ENCODE measurements at regions of chr15 and their contacts with region 1.

Region 1: GRCh38 chr15:66472176-66472999 is 25.2 kb downstream of the SNAPC5 start:
- DNase-seq: no peak
- H3K4me3 ChIP-seq: no peak overlapping the region
- H3K27ac ChIP-seq: peak overlapping the region; percentile 61
- H3K27me3 ChIP-seq: no peaks in the 10 kb centered on the region
- CTCF ChIP-seq: no peak

Region 2: DNA sequence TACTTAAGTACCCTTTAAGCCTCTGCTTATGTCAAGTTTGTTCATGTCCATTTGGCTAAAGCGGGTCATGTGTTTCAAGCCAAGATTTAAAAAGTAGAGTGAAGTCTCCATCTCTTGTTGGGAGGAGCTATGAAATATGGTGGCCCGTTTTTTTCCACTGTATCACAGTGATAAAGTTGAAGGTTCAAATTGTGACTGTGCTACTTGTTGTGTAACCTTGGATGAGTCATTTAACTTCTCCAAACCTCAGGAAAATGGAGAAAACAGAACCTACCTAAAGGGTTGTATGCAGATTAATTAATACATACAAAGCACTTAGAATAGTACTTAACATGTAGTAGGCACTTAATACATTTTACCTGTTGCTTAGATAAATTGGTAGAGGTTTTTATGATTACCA is 18.2 kb before region 1 on chr15:
- CTCF ChIA-PET with region 1: no interaction called
- POLR2A ChIA-PET with region 1: interaction called, 11 read pairs
- DNase-seq: no peak
- H3K4me3 ChIP-seq: no peak overlapping the region
- H3K27ac ChIP-seq: no peak overlapping the region
- H3K27me3 ChIP-seq: no peaks in the 10 kb centered on the region
- CTCF ChIP-seq: no peak

Region 3: GRCh38 chr15:66497502-66498455 is 25.4 kb after region 1 on chr15 and contains the start of gene SNAPC5:
- CTCF ChIA-PET with region 1: interaction called, 18 read pairs
- POLR2A ChIA-PET with region 1: no interaction called
- DNase-seq: peak; percentile 82
- H3K4me3 ChIP-seq: peak within 1 kb of the TSS; percentile 97
- H3K27ac ChIP-seq: peak within 1 kb of the TSS; percentile 63
- H3K27me3 ChIP-seq: no peaks in the 10 kb centered on the region
- CTCF ChIP-seq: peak; percentile 97
- polyA plus RNA-seq, gene SNAPC5: 26.5 and 31.3 TPM in 2 replicates